CD4-positive, alpha-beta memory T cell (primary cell): ENCODE measurements at regions of chr2 and their contacts with region 1.

Region 1: DNA sequence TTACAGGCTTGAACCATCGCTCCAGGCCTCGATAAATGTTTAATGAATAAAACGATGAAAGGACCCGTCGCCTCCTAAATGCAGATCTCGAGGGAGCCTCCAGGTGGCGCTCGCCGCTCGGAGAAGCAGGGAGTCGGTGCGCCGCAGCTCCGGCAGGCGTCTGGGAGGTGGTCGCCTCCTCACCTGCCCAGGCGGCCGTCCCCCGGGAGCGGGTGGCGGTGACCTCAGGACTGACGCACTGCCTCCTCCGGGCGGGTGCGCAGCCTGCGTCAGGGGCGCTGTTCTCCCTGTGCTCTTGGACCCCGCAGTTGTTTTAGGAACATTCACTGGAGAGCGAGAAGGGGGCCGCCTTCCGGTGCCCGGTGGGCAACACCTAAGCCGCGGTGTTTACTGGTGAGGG is 38.6 kb upstream of the POLE4 start:
- DNase-seq: peak; percentile 58 to 64 (median 63)
- H3K4me3 ChIP-seq: no peak overlapping the region
- H3K4me3 Mint-ChIP-seq: peak overlapping the region in 2 of 8 donors; percentile 33 to 36
- H3K27ac ChIP-seq: no peak overlapping the region
- H3K27ac Mint-ChIP-seq: no peak overlapping the region
- H3K4me1 ChIP-seq: no peaks in the 10 kb centered on the region
- H3K4me1 Mint-ChIP-seq: peaks cover 0 to 3% (median 0%) of the 10 kb centered on the region in 4 donors
- H3K27me3 ChIP-seq: no peaks in the 10 kb centered on the region
- H3K27me3 Mint-ChIP-seq: peaks cover 3 to 14% of the 10 kb centered on the region in 2 donors

Region 2: DNA sequence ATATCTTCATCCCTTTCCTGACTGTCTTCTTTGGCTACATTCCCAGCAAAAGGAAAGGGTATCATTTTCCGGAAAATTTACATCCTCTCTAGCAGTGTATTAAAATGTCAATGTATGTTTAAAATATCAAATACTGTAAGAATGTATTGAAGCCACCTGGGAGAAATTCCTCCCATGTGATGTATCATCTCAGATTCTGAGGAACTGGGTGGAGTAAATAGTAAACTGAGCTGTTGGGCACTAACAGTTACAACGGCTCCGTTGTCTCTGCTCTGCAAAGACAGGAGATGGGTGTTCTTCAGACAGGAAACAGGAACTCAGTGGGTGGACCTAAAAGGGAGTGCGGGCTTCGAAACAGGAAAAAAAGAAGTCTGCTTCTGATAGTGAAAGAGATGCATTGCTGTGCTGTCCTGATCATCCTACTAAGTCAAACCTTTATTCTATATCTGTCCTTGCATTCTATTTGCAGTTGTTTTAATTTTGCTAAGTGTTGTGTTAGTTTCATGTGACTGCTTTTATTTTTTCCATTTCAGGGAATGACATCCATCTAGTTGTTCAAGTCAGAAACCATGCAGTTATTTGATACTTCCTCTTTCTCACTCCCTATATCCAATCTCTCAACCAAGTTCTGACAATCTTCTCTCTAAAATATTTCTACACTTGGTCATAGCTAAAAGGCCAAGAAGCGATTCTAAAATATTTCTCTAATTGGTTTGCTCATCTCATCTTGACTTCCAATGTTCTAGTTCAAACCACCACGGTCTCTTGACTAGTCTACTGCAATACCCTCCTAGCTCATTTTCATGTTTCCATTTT is 345.9 kb before region 1 on chr2:
- CTCF ChIA-PET with region 1: no interaction called
- POLR2A ChIA-PET with region 1: no interaction called
- intact Hi-C with region 1: no loop called
- DNase-seq: peak in 4 of 5 donors; percentile 25 to 37 (median 30)
- H3K4me3 ChIP-seq: peak overlapping the region in 1 of 2 donors; percentile 42
- H3K4me3 Mint-ChIP-seq: peak overlapping the region; percentile 12 to 87 (median 78)
- H3K27ac ChIP-seq: no peak overlapping the region
- H3K27ac Mint-ChIP-seq: peak overlapping the region; percentile 58 to 83 (median 80)
- H3K4me1 ChIP-seq: peaks cover 15% of the 10 kb centered on the region
- H3K4me1 Mint-ChIP-seq: peaks cover 13 to 17% (median 14%) of the 10 kb centered on the region in 4 donors
- H3K27me3 ChIP-seq: no peaks in the 10 kb centered on the region
- H3K27me3 Mint-ChIP-seq: peaks cover 0 to 10% of the 10 kb centered on the region in 2 donors

Region 3: GRCh38 chr2:74886811-74887210 is 33.0 kb before region 1 on chr2:
- CTCF ChIA-PET with region 1: no interaction called
- POLR2A ChIA-PET with region 1: no interaction called
- intact Hi-C with region 1: no loop called
- DNase-seq: no peak
- H3K4me3 ChIP-seq: no peak overlapping the region
- H3K4me3 Mint-ChIP-seq: no peak overlapping the region
- H3K27ac ChIP-seq: no peak overlapping the region
- H3K27ac Mint-ChIP-seq: no peak overlapping the region
- H3K4me1 ChIP-seq: no peaks in the 10 kb centered on the region
- H3K4me1 Mint-ChIP-seq: no peaks in the 10 kb centered on the region
- H3K27me3 ChIP-seq: no peaks in the 10 kb centered on the region
- H3K27me3 Mint-ChIP-seq: no peaks in the 10 kb centered on the region

Region 4: DNA sequence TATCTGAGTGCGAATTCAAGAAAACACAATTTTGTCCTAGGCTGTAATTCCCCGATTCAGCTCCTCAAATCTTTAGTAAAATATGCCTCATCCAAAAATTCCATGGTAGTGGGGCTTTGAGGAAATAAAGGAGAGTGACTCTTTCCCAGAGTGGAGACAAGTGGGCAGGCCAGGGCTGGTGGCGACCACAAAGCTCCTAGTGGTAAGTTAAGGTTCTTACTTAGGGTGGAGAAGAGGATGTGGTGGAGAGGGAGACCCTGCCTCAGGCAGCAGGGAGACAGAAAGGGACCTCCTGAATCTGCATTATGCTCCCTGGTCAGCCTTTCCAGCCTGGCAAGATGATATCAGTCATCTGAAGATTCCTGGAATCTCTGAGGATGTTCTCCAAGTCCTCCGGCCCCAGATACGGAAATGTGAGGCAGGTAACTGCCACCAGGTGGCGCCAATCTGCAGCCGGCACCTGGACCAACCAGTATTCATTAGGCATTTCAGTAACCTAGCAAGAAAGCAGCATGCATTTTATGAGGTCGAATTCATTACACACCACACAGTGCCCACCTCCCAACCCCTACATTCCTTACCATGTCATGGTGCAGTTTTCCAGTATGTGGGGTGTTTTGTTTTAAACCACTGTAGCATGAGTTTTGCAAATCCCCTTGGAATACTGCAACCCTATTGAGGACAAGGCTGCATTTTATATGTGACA is 145.0 kb after region 1 on chr2:
- CTCF ChIA-PET with region 1: interaction called, 15 read pairs
- POLR2A ChIA-PET with region 1: no interaction called
- intact Hi-C with region 1: loop called (anchors 10 kb)
- DNase-seq: peak in 4 of 5 donors; percentile 18 to 30 (median 26)
- H3K4me3 ChIP-seq: no peak overlapping the region
- H3K4me3 Mint-ChIP-seq: no peak overlapping the region
- H3K27ac ChIP-seq: no peak overlapping the region
- H3K27ac Mint-ChIP-seq: no peak overlapping the region
- H3K4me1 ChIP-seq: no peaks in the 10 kb centered on the region
- H3K4me1 Mint-ChIP-seq: no peaks in the 10 kb centered on the region
- H3K27me3 ChIP-seq: no peaks in the 10 kb centered on the region
- H3K27me3 Mint-ChIP-seq: no peaks in the 10 kb centered on the region

Region 5: GRCh38 chr2:75123876-75124275 is 204.0 kb after region 1 on chr2:
- CTCF ChIA-PET with region 1: no interaction called
- POLR2A ChIA-PET with region 1: no interaction called
- intact Hi-C with region 1: no loop called
- DNase-seq: no peak
- H3K4me3 ChIP-seq: no peak overlapping the region
- H3K4me3 Mint-ChIP-seq: no peak overlapping the region
- H3K27ac ChIP-seq: no peak overlapping the region
- H3K27ac Mint-ChIP-seq: no peak overlapping the region
- H3K4me1 ChIP-seq: no peaks in the 10 kb centered on the region
- H3K4me1 Mint-ChIP-seq: no peaks in the 10 kb centered on the region
- H3K27me3 ChIP-seq: no peaks in the 10 kb centered on the region
- H3K27me3 Mint-ChIP-seq: peaks cover 0 to 2% of the 10 kb centered on the region in 2 donors

Region 6: DNA sequence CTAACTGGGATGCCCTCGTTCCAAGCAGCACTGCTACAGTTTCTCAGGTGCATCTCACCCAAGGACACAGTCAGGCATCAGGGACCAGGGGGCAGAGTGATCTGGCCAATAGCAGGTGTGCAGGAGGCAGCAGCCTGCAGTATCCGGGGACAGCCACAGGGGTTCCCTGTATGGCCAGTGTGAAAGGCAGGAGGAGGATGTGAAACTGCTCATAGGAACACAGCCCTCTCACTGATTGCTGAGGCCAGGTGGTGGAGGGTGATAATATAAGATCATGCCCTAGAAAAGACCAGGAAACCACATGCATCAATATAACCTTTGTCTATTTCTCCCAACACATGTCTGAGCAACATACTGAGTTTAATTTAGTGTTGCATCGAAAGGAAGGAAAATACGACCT is 392.2 kb after region 1 on chr2:
- CTCF ChIA-PET with region 1: no interaction called
- POLR2A ChIA-PET with region 1: no interaction called
- intact Hi-C with region 1: no loop called
- DNase-seq: no peak
- H3K4me3 ChIP-seq: no peak overlapping the region
- H3K4me3 Mint-ChIP-seq: no peak overlapping the region
- H3K27ac ChIP-seq: no peak overlapping the region
- H3K27ac Mint-ChIP-seq: no peak overlapping the region
- H3K4me1 ChIP-seq: no peaks in the 10 kb centered on the region
- H3K4me1 Mint-ChIP-seq: no peaks in the 10 kb centered on the region
- H3K27me3 ChIP-seq: no peaks in the 10 kb centered on the region
- H3K27me3 Mint-ChIP-seq: peaks cover 2 to 4% of the 10 kb centered on the region in 2 donors

Region 7: GRCh38 chr2:75403991-75404428 is 484.2 kb after region 1 on chr2:
- CTCF ChIA-PET with region 1: interaction called, 52 read pairs
- POLR2A ChIA-PET with region 1: no interaction called
- intact Hi-C with region 1: no loop called
- DNase-seq: peak in 4 of 5 donors; percentile 31 to 37 (median 35)
- H3K4me3 ChIP-seq: no peak overlapping the region
- H3K4me3 Mint-ChIP-seq: no peak overlapping the region
- H3K27ac ChIP-seq: no peak overlapping the region
- H3K27ac Mint-ChIP-seq: no peak overlapping the region
- H3K4me1 ChIP-seq: no peaks in the 10 kb centered on the region
- H3K4me1 Mint-ChIP-seq: no peaks in the 10 kb centered on the region
- H3K27me3 ChIP-seq: peaks cover 6% of the 10 kb centered on the region
- H3K27me3 Mint-ChIP-seq: peaks cover 19 to 20% of the 10 kb centered on the region in 2 donors

Region 8: DNA sequence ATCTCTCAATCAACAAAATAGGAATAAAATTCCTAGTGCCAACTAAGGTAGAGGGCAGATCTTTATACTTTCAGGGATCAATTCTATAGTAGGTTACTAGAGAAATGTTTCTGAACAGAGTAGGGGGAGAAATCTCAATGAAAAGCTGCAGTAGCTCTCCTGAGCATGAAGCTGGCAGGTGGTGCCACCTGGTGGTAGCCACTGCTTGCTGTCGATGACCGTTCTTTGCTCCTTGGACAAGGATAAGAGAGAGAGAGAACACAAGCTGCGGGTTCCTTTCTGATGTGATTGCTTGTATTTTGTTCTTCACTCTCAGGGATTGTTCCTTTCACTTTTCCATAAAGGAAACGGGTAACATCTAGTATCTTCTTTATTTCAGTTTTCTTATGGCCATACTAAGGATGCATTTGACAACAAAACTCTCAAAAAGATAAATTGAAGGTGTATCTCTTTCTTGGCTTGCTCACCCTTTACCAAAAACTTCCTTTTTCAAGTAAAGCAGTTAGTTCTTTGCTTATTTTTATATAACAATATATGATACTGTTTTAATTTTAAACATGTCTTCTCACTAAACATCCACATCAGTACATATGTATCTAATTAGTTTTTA is 708.2 kb after region 1 on chr2:
- CTCF ChIA-PET with region 1: interaction called, 7 read pairs
- POLR2A ChIA-PET with region 1: no interaction called
- intact Hi-C with region 1: loop called (anchors 1 kb)
- DNase-seq: peak; percentile 24 to 50 (median 29)
- H3K4me3 ChIP-seq: no peak overlapping the region
- H3K4me3 Mint-ChIP-seq: no peak overlapping the region
- H3K27ac ChIP-seq: no peak overlapping the region
- H3K27ac Mint-ChIP-seq: no peak overlapping the region
- H3K4me1 ChIP-seq: no peaks in the 10 kb centered on the region
- H3K4me1 Mint-ChIP-seq: peaks cover 0 to 4% (median 0%) of the 10 kb centered on the region in 4 donors
- H3K27me3 ChIP-seq: no peaks in the 10 kb centered on the region
- H3K27me3 Mint-ChIP-seq: peaks cover 16 to 28% of the 10 kb centered on the region in 2 donors